Panc1 (cell line): ENCODE measurements at regions of chr9 and their contacts with region 1.

Region 1: GRCh38 chr9:32487981-32488380 is 38.0 kb downstream of the RIGI start:
- DNase-seq: no peak
- ATAC-seq: no peak
- H3K4me3 ChIP-seq: no peak overlapping the region
- H3K27ac ChIP-seq: no peak overlapping the region
- H3K4me1 ChIP-seq: no peaks in the 10 kb centered on the region
- H3K27me3 ChIP-seq: no peaks in the 10 kb centered on the region
- CTCF ChIP-seq: no peak

Region 2: DNA sequence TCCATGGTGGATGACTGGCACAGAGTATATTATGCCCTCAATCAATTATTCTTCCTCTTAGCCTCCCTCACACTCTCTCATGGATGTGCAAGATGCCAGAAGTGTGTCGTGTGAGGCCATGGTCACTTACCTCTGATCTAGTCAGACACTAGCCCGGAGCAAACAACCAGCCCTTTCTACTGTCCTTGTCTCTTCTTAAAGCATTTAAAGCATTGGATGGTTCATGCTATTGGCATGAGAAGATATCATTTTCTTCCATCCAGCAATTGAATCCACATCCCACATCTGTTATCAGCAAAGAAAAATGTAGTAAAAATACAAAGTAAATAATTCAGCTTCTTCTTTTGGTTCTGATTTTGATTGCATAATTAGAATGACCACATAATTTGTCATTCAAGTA is 370.7 kb before region 1 on chr9:
- CTCF ChIA-PET with region 1: no interaction called
- POLR2A ChIA-PET with region 1: no interaction called
- in situ Hi-C with region 1: no loop called
- intact Hi-C with region 1: no loop called
- DNase-seq: no peak
- ATAC-seq: no peak
- H3K4me3 ChIP-seq: no peak overlapping the region
- H3K27ac ChIP-seq: no peak overlapping the region
- H3K4me1 ChIP-seq: no peaks in the 10 kb centered on the region
- H3K27me3 ChIP-seq: no peaks in the 10 kb centered on the region
- CTCF ChIP-seq: no peak

Region 3: DNA sequence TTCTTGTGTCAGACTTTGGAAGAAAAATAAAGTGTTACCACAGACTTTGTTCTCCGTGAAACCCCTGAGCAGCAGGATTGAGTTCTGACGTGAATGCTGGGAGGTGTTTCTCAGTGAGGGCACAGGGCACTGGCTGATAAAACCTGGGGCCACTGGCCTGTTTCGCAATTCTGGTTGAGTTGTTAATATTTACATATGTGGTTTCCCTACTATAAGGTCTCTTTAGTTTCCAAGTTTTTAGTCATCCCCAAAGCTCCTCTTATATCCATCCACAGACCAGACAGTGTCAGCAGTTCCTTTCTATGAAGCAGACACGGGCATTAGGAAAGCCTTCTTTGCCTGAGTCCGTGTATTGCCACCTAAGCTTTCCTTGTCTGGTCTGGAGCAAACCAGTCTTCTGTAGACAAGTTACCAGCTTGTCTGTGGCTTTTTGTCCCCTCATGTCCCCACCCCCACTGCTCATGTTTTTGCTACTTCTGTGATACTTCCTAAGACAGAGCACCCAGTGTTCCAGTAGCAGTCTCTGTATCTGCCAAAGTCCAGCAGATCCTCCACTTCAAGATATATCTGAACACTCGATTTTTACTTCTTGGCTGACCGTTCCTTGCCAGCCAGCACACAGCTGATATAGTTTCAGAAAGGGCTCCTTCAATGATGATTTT is 61.6 kb before region 1 on chr9:
- CTCF ChIA-PET with region 1: no interaction called
- POLR2A ChIA-PET with region 1: no interaction called
- in situ Hi-C with region 1: no loop called
- intact Hi-C with region 1: loop called (anchors 10 kb)
- DNase-seq: no peak
- ATAC-seq: no peak
- H3K4me3 ChIP-seq: no peak overlapping the region
- H3K27ac ChIP-seq: no peak overlapping the region
- H3K4me1 ChIP-seq: no peaks in the 10 kb centered on the region
- H3K27me3 ChIP-seq: no peaks in the 10 kb centered on the region
- CTCF ChIP-seq: no peak